CD4-positive, alpha-beta memory T cell (primary cell): ENCODE measurements at regions of chr3 and their contacts with region 1.

Region 1: DNA sequence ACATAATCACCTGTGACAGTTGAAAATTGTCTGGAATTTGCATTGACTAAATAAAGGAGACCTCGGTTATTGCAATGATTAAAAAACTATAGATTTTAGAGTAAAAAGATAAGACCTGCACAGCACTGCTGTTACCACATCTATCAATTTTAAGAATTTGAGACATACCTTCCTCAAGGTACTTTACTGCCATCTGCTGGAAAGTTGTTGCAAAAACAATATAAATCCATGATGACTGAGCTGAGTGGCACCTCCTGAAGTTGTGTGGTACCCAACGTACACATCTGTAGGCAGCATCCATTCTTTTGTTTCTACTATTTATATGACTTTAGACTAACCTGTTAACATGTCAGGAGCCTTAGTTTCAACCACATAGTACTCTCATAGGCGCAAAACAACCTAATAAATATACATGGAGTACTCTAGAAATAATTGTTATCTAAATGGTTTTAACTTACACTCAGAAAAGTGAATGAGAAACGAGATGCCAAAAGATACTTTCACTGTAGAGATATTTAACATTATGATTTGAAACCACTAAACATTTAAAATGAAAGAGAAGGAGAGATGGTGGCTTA is 106.7 kb downstream of the GHSR start:
- DNase-seq: peak in 4 of 5 donors; percentile 58 to 66 (median 62)
- H3K4me3 ChIP-seq: no peak overlapping the region
- H3K4me3 Mint-ChIP-seq: no peak overlapping the region
- H3K27ac ChIP-seq: no peak overlapping the region
- H3K27ac Mint-ChIP-seq: no peak overlapping the region
- H3K4me1 ChIP-seq: no peaks in the 10 kb centered on the region
- H3K4me1 Mint-ChIP-seq: no peaks in the 10 kb centered on the region
- H3K27me3 ChIP-seq: no peaks in the 10 kb centered on the region
- H3K27me3 Mint-ChIP-seq: no peaks in the 10 kb centered on the region

Region 2: GRCh38 chr3:170961616-170962400 is 1379.8 kb before region 1 on chr3:
- CTCF ChIA-PET with region 1: interaction called, 3 read pairs
- POLR2A ChIA-PET with region 1: no interaction called
- intact Hi-C with region 1: loop called (anchors 2 kb)
- DNase-seq: peak in 3 of 5 donors; percentile 10 to 16 (median 15)
- H3K4me3 ChIP-seq: no peak overlapping the region
- H3K4me3 Mint-ChIP-seq: no peak overlapping the region
- H3K27ac ChIP-seq: no peak overlapping the region
- H3K27ac Mint-ChIP-seq: no peak overlapping the region
- H3K4me1 ChIP-seq: no peaks in the 10 kb centered on the region
- H3K4me1 Mint-ChIP-seq: no peaks in the 10 kb centered on the region
- H3K27me3 ChIP-seq: no peaks in the 10 kb centered on the region
- H3K27me3 Mint-ChIP-seq: peaks cover 0 to 2% of the 10 kb centered on the region in 2 donors

Region 3: DNA sequence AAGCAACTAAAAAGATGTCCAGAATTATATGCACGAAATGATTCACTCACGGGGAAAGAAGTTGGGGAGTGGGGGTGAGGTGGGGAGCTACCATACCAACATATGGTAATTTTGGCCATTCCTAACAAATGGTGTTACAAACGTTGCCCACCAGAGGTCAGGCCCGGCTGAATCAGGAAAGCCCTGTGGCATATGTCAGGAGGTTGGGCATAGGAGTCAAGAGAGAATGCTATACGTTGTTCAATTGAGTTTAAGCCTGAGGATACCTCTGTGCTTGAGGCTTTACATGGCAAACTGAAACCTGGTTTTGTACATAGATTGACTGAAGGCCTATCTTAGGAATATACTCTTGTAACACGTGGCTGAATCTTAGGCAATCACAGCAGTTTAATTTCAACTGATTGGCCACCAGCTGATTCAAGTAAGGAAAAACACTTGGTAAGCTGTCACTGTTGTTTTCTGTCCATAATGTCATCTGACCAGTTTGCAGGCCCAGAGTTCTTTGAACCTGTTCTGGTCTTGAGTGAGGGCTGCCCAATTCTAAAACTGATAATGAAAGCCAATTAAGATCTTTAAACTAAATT is 1291.6 kb before region 1 on chr3:
- CTCF ChIA-PET with region 1: no interaction called
- POLR2A ChIA-PET with region 1: no interaction called
- intact Hi-C with region 1: loop called (anchors 2 kb)
- DNase-seq: peak in 4 of 5 donors; percentile 17 to 37 (median 23)
- H3K4me3 ChIP-seq: no peak overlapping the region
- H3K4me3 Mint-ChIP-seq: no peak overlapping the region
- H3K27ac ChIP-seq: no peak overlapping the region
- H3K27ac Mint-ChIP-seq: no peak overlapping the region
- H3K4me1 ChIP-seq: no peaks in the 10 kb centered on the region
- H3K4me1 Mint-ChIP-seq: peaks cover 0 to 4% (median 1%) of the 10 kb centered on the region in 4 donors
- H3K27me3 ChIP-seq: no peaks in the 10 kb centered on the region
- H3K27me3 Mint-ChIP-seq: peaks cover 6 to 7% of the 10 kb centered on the region in 2 donors

Region 4: GRCh38 chr3:171646357-171647133 is 695.0 kb before region 1 on chr3:
- CTCF ChIA-PET with region 1: interaction called, 18 read pairs
- POLR2A ChIA-PET with region 1: no interaction called
- intact Hi-C with region 1: no loop called
- DNase-seq: peak in 4 of 5 donors; percentile 5 to 12 (median 6)
- H3K4me3 ChIP-seq: no peak overlapping the region
- H3K4me3 Mint-ChIP-seq: no peak overlapping the region
- H3K27ac ChIP-seq: no peak overlapping the region
- H3K27ac Mint-ChIP-seq: no peak overlapping the region
- H3K4me1 ChIP-seq: no peaks in the 10 kb centered on the region
- H3K4me1 Mint-ChIP-seq: no peaks in the 10 kb centered on the region
- H3K27me3 ChIP-seq: no peaks in the 10 kb centered on the region
- H3K27me3 Mint-ChIP-seq: no peaks in the 10 kb centered on the region

Region 5: GRCh38 chr3:171772427-171773056 is 569.0 kb before region 1 on chr3:
- CTCF ChIA-PET with region 1: interaction called, 14 read pairs
- POLR2A ChIA-PET with region 1: no interaction called
- intact Hi-C with region 1: no loop called
- DNase-seq: peak; percentile 32 to 39 (median 36)
- H3K4me3 ChIP-seq: no peak overlapping the region
- H3K4me3 Mint-ChIP-seq: no peak overlapping the region
- H3K27ac ChIP-seq: no peak overlapping the region
- H3K27ac Mint-ChIP-seq: no peak overlapping the region
- H3K4me1 ChIP-seq: no peaks in the 10 kb centered on the region
- H3K4me1 Mint-ChIP-seq: peaks cover 0 to 6% (median 1%) of the 10 kb centered on the region in 4 donors
- H3K27me3 ChIP-seq: no peaks in the 10 kb centered on the region
- H3K27me3 Mint-ChIP-seq: peaks cover under 1 to 5% of the 10 kb centered on the region in 2 donors

Region 6: GRCh38 chr3:172039436-172040077 is 302.0 kb before region 1 on chr3 and contains the start of gene FNDC3B:
- CTCF ChIA-PET with region 1: interaction called, 82 read pairs
- POLR2A ChIA-PET with region 1: no interaction called
- intact Hi-C with region 1: loop called (anchors 1 kb)
- DNase-seq: peak; percentile 90 to 93 (median 91)
- H3K4me3 ChIP-seq: peak within 1 kb of the TSS; percentile 61 to 62
- H3K4me3 Mint-ChIP-seq: peak within 1 kb of the TSS; percentile 94 to 99 (median 97)
- H3K27ac ChIP-seq: peak within 1 kb of the TSS; percentile 92
- H3K27ac Mint-ChIP-seq: peak within 1 kb of the TSS; percentile 94 to 99 (median 96)
- H3K4me1 ChIP-seq: peaks cover 29% of the 10 kb centered on the region
- H3K4me1 Mint-ChIP-seq: peaks cover 25 to 58% (median 37%) of the 10 kb centered on the region in 4 donors
- H3K27me3 ChIP-seq: no peaks in the 10 kb centered on the region
- H3K27me3 Mint-ChIP-seq: no peaks in the 10 kb centered on the region
- total RNA-seq, gene FNDC3B: 18.0 to 18.2 TPM

Region 7: DNA sequence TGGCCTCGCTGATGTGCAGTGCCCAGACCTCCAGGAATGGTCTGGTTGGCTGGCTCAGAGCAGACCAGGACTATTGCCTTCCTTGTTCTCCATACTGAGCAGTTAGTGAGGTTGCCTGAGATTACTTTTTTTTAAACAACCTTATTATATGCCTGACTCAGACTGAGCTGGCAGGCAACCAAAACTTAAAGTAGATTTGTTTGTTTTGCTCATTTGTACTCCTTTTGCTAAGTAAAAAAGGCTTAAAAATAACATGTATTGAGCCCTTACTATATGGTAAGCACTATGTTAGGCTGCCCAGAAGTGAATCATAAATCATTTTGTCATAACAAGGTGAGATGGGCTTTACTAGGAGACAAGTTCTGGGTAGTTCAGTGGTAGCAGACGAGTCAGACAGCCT is 14.3 kb after region 1 on chr3:
- CTCF ChIA-PET with region 1: interaction called, 33 read pairs
- POLR2A ChIA-PET with region 1: no interaction called
- intact Hi-C with region 1: no loop called
- DNase-seq: no peak
- H3K4me3 ChIP-seq: no peak overlapping the region
- H3K4me3 Mint-ChIP-seq: no peak overlapping the region
- H3K27ac ChIP-seq: no peak overlapping the region
- H3K27ac Mint-ChIP-seq: no peak overlapping the region
- H3K4me1 ChIP-seq: no peaks in the 10 kb centered on the region
- H3K4me1 Mint-ChIP-seq: peaks cover 0 to 2% (median 0%) of the 10 kb centered on the region in 4 donors
- H3K27me3 ChIP-seq: no peaks in the 10 kb centered on the region
- H3K27me3 Mint-ChIP-seq: no peaks in the 10 kb centered on the region

Region 8: GRCh38 chr3:172388412-172389078 is 47.0 kb after region 1 on chr3:
- CTCF ChIA-PET with region 1: no interaction called
- POLR2A ChIA-PET with region 1: no interaction called
- intact Hi-C with region 1: no loop called
- DNase-seq: no peak
- H3K4me3 ChIP-seq: no peak overlapping the region
- H3K4me3 Mint-ChIP-seq: no peak overlapping the region
- H3K27ac ChIP-seq: no peak overlapping the region
- H3K27ac Mint-ChIP-seq: no peak overlapping the region
- H3K4me1 ChIP-seq: no peaks in the 10 kb centered on the region
- H3K4me1 Mint-ChIP-seq: no peaks in the 10 kb centered on the region
- H3K27me3 ChIP-seq: no peaks in the 10 kb centered on the region
- H3K27me3 Mint-ChIP-seq: no peaks in the 10 kb centered on the region